ENCODE measurements at regions of chr15 and their contacts with region 1.

Region 1: DNA sequence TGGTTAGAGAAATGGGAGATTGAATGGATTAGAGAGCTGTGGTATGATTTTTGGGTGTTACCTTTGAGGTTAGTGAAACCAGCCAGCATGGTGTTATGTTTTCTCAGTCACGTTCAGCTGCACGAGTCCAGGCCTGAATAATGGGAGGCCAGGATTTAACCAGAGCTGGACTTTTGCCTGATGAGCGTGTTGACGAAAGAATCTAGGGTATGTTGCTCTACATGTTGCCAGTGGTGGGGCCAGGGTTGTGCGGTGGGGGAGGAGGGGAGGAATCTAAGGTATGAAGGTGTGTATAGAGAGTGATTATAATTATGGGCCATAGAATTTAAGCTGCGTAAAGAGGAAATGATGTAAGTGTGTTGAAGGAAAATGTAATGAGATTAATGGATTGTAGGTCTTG is 22.8 kb downstream of the MINDY2 start:
- DNase-seq: no peak
- ATAC-seq: no peak
- H3K4me3 ChIP-seq: no peak overlapping the region
- H3K27ac ChIP-seq: no peak overlapping the region
- H3K4me1 ChIP-seq: no peaks in the 10 kb centered on the region
- H3K27me3 ChIP-seq: no peaks in the 10 kb centered on the region
- CTCF ChIP-seq: no peak
- EP300 ChIP-seq: no peak
- POLR2A ChIP-seq: no peak
- RAD21 ChIP-seq: no peak

Region 2: GRCh38 chr15:58650102-58650501 is 143.8 kb before region 1 on chr15:
- CTCF ChIA-PET with region 1: no interaction called
- POLR2A ChIA-PET with region 1: no interaction called
- RAD21 ChIA-PET with region 1: no interaction called
- SMC1A ChIA-PET with region 1: no interaction called
- in situ Hi-C with region 1: no loop called
- intact Hi-C with region 1: no loop called
- DNase-seq: no peak
- ATAC-seq: no peak
- H3K4me3 ChIP-seq: no peak overlapping the region
- H3K27ac ChIP-seq: no peak overlapping the region
- H3K4me1 ChIP-seq: no peaks in the 10 kb centered on the region
- H3K27me3 ChIP-seq: no peaks in the 10 kb centered on the region
- CTCF ChIP-seq: no peak
- EP300 ChIP-seq: no peak
- POLR2A ChIP-seq: no peak
- RAD21 ChIP-seq: no peak

Region 3: GRCh38 chr15:58758138-58758537 is 35.7 kb before region 1 on chr15:
- CTCF ChIA-PET with region 1: no interaction called
- POLR2A ChIA-PET with region 1: no interaction called
- RAD21 ChIA-PET with region 1: no interaction called
- SMC1A ChIA-PET with region 1: no interaction called
- in situ Hi-C with region 1: no loop called
- intact Hi-C with region 1: no loop called
- DNase-seq: no peak
- ATAC-seq: peak; percentile 72
- H3K4me3 ChIP-seq: no peak overlapping the region
- H3K27ac ChIP-seq: no peak overlapping the region
- H3K4me1 ChIP-seq: no peaks in the 10 kb centered on the region
- H3K27me3 ChIP-seq: no peaks in the 10 kb centered on the region
- CTCF ChIP-seq: peak; percentile 36 to 65 (median 44); a peak in 5 of 6 replicates
- EP300 ChIP-seq: no peak
- POLR2A ChIP-seq: no peak
- RAD21 ChIP-seq: peak; percentile 72

Region 4: DNA sequence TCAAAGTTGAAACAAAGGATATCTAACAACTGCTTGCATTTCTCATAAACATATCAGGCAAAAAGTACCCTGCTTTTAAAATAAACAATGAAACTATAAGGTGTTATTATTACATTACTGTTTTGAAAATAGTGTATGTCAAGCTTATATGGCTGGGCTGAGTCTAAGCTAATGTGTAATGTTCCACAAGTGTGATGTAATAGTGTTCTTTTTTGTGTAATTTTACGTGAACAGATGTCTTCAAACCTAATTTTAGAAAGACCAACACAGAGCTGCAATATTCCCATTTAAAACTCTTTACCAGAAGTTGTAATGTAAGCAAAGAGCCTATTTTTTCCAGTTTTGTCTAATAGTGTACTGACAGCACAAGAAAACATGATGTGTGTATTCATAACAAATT is 11.2 kb after region 1 on chr15:
- CTCF ChIA-PET with region 1: no interaction called
- POLR2A ChIA-PET with region 1: no interaction called
- RAD21 ChIA-PET with region 1: no interaction called
- SMC1A ChIA-PET with region 1: interaction called, 11 read pairs
- in situ Hi-C with region 1: no loop called
- intact Hi-C with region 1: no loop called
- DNase-seq: no peak
- ATAC-seq: no peak
- H3K4me3 ChIP-seq: no peak overlapping the region
- H3K27ac ChIP-seq: no peak overlapping the region
- H3K4me1 ChIP-seq: no peaks in the 10 kb centered on the region
- H3K27me3 ChIP-seq: no peaks in the 10 kb centered on the region
- CTCF ChIP-seq: no peak
- EP300 ChIP-seq: no peak
- POLR2A ChIP-seq: no peak
- RAD21 ChIP-seq: no peak